ENCODE measurements at regions of chr1 and their contacts with region 1.

Region 1: GRCh38 chr1:185595835-185596667 is 138.1 kb upstream of the HMCN1 start:
- DNase-seq: no peak
- ATAC-seq: peak in 1 of 2 donors; percentile 39
- H3K4me3 ChIP-seq: no peak overlapping the region
- H3K27ac ChIP-seq: no peak overlapping the region
- H3K4me1 ChIP-seq: peaks cover 3% of the 10 kb centered on the region
- H3K27me3 ChIP-seq: no peaks in the 10 kb centered on the region

Region 2: GRCh38 chr1:185534801-185535200 is 61.2 kb before region 1 on chr1:
- intact Hi-C with region 1: no loop called
- DNase-seq: no peak
- ATAC-seq: peak; percentile 62 to 71
- H3K4me3 ChIP-seq: no peak overlapping the region
- H3K27ac ChIP-seq: peak overlapping the region; percentile 25
- H3K4me1 ChIP-seq: peaks cover 3% of the 10 kb centered on the region
- H3K27me3 ChIP-seq: no peaks in the 10 kb centered on the region

Region 3: GRCh38 chr1:185652348-185652747 is 56.3 kb after region 1 on chr1:
- intact Hi-C with region 1: loop called in 1 of 4 experiments (anchors 10 kb)
- DNase-seq: no peak
- ATAC-seq: no peak
- H3K4me3 ChIP-seq: no peak overlapping the region
- H3K27ac ChIP-seq: no peak overlapping the region
- H3K4me1 ChIP-seq: no peaks in the 10 kb centered on the region
- H3K27me3 ChIP-seq: no peaks in the 10 kb centered on the region

Region 4: GRCh38 chr1:185786524-185786923 is 190.5 kb after region 1 on chr1:
- intact Hi-C with region 1: no loop called
- DNase-seq: no peak
- ATAC-seq: no peak
- H3K4me3 ChIP-seq: no peak overlapping the region
- H3K27ac ChIP-seq: no peak overlapping the region
- H3K4me1 ChIP-seq: peaks cover 5% of the 10 kb centered on the region
- H3K27me3 ChIP-seq: no peaks in the 10 kb centered on the region